ENCODE measurements at regions of chr10 and their contacts with region 1.

Region 1: DNA sequence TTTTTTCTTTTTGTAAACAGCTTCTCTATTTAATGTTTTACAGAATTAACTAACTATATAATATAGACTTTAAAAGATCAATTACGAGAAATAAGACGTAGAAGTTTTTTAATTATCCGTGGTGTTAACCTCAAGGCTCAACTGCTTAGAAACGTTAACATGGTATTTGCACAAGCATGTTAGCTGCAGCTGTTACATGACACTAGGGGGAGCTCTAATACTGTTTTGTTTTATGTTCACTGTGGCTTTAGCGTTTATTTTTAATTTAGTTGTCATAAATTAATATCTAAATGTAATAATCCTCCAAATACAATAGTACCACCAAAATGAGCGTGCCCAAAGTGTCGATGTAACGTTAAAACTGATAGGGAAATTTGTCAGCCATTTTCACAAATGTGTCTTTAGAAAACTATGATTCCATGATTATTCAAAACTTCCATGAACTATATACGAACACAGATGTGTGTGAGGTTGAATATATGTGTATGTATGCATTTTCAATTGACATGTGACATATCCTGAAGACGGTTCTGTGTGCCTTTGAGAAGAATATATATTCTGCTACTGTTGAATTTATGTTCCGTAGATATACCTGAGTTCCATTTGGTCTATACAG is 828.8 kb upstream of the MBL2 start:
- DNase-seq: peak; percentile 52
- H3K4me3 ChIP-seq: no peak overlapping the region
- H3K27ac ChIP-seq: no peak overlapping the region
- H3K4me1 ChIP-seq: no peaks in the 10 kb centered on the region
- H3K27me3 ChIP-seq: peaks cover 2 to 9% of the 10 kb centered on the region in 2 experiments
- CTCF ChIP-seq: peak; percentile 67 to 75
- POLR2A ChIP-seq: no peak

Region 2: GRCh38 chr10:52951824-52952223 is 649.5 kb before region 1 on chr10:
- CTCF ChIA-PET with region 1: interaction called, 6 read pairs
- POLR2A ChIA-PET with region 1: no interaction called
- dilution Hi-C with region 1: no loop called
- intact Hi-C with region 1: loop called (anchors 5 kb)
- DNase-seq: peak; percentile 73
- H3K4me3 ChIP-seq: no peak overlapping the region
- H3K27ac ChIP-seq: no peak overlapping the region
- H3K4me1 ChIP-seq: no peaks in the 10 kb centered on the region
- H3K27me3 ChIP-seq: no peaks in the 10 kb centered on the region
- CTCF ChIP-seq: peak; percentile 55 to 71
- POLR2A ChIP-seq: no peak

Region 3: DNA sequence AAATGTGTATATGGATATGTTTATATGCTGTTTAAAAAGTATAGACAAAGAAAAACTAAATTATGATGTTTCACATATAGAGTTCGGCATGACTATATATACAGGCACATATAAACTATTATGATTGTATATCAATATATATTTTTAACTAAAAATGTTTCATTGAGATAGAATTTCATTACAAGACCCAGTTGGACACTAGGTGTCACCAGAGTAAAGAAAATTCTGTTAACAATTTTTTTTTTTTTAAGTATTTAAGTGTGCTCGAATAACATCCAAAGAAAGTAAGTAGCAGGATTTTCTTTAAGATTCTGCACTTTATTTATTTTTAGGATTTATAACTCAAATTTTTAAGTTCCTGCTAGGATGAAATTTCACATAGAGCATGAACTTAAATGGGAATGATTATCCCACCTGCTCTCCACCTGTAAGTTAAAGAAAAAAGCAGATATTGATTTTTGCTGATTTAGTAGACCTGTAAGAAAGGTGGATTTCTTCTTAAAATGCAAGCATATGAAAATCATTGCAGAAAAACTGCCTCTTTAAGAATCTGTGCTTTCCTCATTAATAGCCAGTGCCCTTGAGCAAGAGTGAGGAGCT is 238.2 kb after region 1 on chr10:
- CTCF ChIA-PET with region 1: interaction called, 3 read pairs
- POLR2A ChIA-PET with region 1: no interaction called
- dilution Hi-C with region 1: no loop called
- intact Hi-C with region 1: loop called (anchors 5 kb)
- DNase-seq: peak; percentile 54
- H3K4me3 ChIP-seq: no peak overlapping the region
- H3K27ac ChIP-seq: no peak overlapping the region
- H3K4me1 ChIP-seq: no peaks in the 10 kb centered on the region
- H3K27me3 ChIP-seq: no peaks in the 10 kb centered on the region
- CTCF ChIP-seq: peak in 1 of 2 donors; percentile 30
- POLR2A ChIP-seq: no peak

Region 4: DNA sequence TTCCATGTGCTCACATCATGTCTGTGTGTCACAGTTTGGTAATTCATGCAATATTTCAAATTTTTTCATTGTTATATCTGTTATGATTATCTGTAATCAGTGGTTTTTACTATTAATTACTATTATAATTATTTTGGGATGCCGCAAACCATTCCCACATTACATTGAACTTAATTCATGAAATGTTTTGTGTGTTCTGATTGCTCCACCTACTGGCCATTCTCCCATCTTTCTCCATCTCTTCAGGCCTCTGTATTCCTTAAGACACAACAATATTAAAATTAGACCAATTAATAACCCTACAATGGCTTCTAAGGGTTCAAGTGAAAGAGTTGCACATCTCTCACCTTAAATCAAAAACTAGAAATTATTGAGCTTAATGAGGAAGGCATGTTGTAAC is 801.2 kb after region 1 on chr10:
- CTCF ChIA-PET with region 1: interaction called, 10 read pairs
- POLR2A ChIA-PET with region 1: no interaction called
- dilution Hi-C with region 1: no loop called
- intact Hi-C with region 1: loop called (anchors 1 kb)
- DNase-seq: peak; percentile 53
- H3K4me3 ChIP-seq: no peak overlapping the region
- H3K27ac ChIP-seq: no peak overlapping the region
- H3K4me1 ChIP-seq: no peaks in the 10 kb centered on the region
- H3K27me3 ChIP-seq: no peaks in the 10 kb centered on the region
- CTCF ChIP-seq: peak; percentile 16 to 44
- POLR2A ChIP-seq: no peak

Measured in endothelial cell of umbilical vein (primary cell).